Panc1 (cell line): ENCODE measurements at regions of chr6 and their contacts with region 1.

Region 1: DNA sequence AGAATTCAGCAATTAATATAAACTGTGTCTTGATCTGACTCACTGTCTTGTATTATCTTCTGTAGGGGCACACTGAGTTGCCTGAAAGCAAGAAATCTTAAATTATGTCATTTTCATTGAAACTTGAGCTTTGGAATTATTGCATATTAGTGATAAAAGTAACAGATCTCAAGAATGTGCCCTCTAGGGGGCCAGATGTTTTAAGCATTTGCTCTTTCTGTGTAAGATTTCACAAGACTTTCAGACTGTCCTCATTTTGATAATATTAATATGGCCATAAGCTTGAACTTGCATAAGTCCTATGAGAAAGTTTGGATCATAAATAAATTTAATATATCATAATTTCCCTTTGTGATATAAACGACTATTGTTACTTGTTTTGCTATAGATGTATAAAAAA is 55.5 kb upstream of the MYO6 start:
- DNase-seq: no peak
- ATAC-seq: no peak
- H3K4me3 ChIP-seq: no peak overlapping the region
- H3K27ac ChIP-seq: no peak overlapping the region
- H3K4me1 ChIP-seq: no peaks in the 10 kb centered on the region
- H3K27me3 ChIP-seq: no peaks in the 10 kb centered on the region
- CTCF ChIP-seq: no peak

Region 2: GRCh38 chr6:75502884-75503665 is 190.5 kb before region 1 on chr6:
- CTCF ChIA-PET with region 1: interaction called, 13 read pairs
- POLR2A ChIA-PET with region 1: no interaction called
- in situ Hi-C with region 1: no loop called
- intact Hi-C with region 1: no loop called
- DNase-seq: no peak
- ATAC-seq: no peak
- H3K4me3 ChIP-seq: no peak overlapping the region
- H3K27ac ChIP-seq: no peak overlapping the region
- H3K4me1 ChIP-seq: no peaks in the 10 kb centered on the region
- H3K27me3 ChIP-seq: no peaks in the 10 kb centered on the region
- CTCF ChIP-seq: no peak

Region 3: DNA sequence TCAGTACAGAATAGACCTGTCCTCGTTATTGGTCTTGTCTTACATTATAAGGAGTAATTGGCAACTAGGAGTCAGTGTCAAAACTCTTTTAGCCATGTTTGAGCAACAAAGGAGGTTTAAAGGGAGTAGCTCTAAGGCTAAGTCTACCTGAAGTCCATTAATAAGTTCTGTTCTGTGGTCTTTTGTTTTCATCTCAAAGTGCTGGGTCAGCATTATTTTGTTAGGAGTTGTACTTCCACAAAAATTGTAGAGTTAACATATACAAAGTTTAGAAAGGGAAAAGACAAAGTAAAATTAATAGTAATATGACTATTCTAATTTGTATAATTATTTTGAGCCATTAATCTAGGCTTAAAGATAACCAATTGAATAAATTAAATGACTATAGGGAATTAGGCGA is 104.6 kb before region 1 on chr6:
- CTCF ChIA-PET with region 1: no interaction called
- POLR2A ChIA-PET with region 1: no interaction called
- in situ Hi-C with region 1: no loop called
- intact Hi-C with region 1: no loop called
- DNase-seq: no peak
- ATAC-seq: no peak
- H3K4me3 ChIP-seq: no peak overlapping the region
- H3K27ac ChIP-seq: no peak overlapping the region
- H3K4me1 ChIP-seq: no peaks in the 10 kb centered on the region
- H3K27me3 ChIP-seq: no peaks in the 10 kb centered on the region
- CTCF ChIP-seq: no peak

Region 4: DNA sequence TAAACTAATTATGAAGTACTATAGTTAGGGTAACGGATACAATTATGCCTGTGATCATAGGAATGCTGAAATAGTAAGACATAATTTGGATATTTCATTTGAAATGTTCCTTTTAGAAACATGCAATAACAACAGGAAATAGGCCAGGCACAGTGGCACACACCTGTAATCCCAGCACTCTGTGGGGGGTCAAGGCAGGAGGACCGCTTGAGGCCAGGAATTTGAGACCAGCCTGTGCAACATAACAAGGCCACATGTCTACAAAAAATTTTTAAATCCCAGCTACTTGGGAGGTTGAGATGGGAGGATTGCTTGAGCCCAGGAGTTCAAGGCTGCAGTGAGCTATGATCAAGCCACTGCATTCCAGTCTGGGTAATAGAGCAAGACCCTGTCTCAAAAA is 29.8 kb after region 1 on chr6:
- CTCF ChIA-PET with region 1: no interaction called
- POLR2A ChIA-PET with region 1: interaction called, 18 read pairs
- in situ Hi-C with region 1: no loop called
- intact Hi-C with region 1: no loop called
- DNase-seq: no peak
- ATAC-seq: no peak
- H3K4me3 ChIP-seq: no peak overlapping the region
- H3K27ac ChIP-seq: no peak overlapping the region
- H3K4me1 ChIP-seq: no peaks in the 10 kb centered on the region
- H3K27me3 ChIP-seq: no peaks in the 10 kb centered on the region
- CTCF ChIP-seq: no peak